PC-3 (cell line): ENCODE measurements at regions of chr2 and their contacts with region 1.

Region 1: DNA sequence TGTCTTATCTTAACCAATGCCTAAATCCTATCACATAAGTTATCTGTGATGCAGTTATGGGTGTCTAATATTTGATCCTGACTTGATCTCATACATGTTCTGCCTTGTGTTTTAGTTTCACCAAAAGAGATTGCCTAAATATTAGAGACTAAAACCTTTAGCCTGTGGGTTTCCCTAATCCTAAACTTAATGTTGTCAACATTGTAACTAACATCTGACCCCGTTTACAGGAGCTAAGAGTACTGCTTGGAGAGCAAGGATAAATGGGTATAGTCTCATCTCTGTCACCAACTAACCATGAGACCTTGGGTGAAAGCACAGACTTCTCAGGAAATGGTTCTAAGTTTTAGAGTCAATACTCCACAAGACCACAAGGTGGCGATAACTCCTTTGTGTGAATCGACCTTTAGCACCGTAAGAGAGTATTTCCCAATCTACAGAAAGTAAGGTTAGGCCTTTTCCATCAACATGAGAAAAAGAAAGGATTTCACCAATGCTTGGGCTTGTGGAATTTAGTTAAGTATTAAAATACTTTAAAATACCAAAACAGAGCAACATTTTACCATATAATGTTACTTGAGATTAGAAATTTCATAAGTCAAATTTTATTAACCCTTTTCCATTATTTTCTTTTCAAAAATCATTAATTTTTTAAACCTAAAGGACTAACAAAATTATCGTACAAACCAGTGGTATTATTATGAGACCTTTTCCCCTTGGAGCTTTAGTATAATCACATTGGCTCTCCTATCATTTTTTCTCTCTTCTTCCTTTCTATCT is 60.5 kb downstream of the G6PC2 start:
- DNase-seq: peak; percentile 92
- ATAC-seq: peak; percentile 82
- H3K4me3 ChIP-seq: no peak overlapping the region
- H3K27ac ChIP-seq: peak overlapping the region; percentile 16; the same call in 1 of the 2 replicates
- H3K4me1 ChIP-seq: peaks cover 32% of the 10 kb centered on the region
- H3K27me3 ChIP-seq: no peaks in the 10 kb centered on the region
- CTCF ChIP-seq: peak; percentile 88

Region 2: GRCh38 chr2:168626096-168626495 is 335.5 kb before region 1 on chr2:
- CTCF ChIA-PET with region 1: no interaction called
- POLR2A ChIA-PET with region 1: no interaction called
- intact Hi-C with region 1: no loop called
- DNase-seq: no peak
- ATAC-seq: no peak
- H3K4me3 ChIP-seq: no peak overlapping the region
- H3K27ac ChIP-seq: no peak overlapping the region
- H3K4me1 ChIP-seq: peaks cover 13% of the 10 kb centered on the region
- H3K27me3 ChIP-seq: no peaks in the 10 kb centered on the region
- CTCF ChIP-seq: no peak

Region 3: GRCh38 chr2:169038338-169038757 is 76.7 kb after region 1 on chr2:
- CTCF ChIA-PET with region 1: no interaction called
- POLR2A ChIA-PET with region 1: no interaction called
- intact Hi-C with region 1: loop called (anchors 5 kb)
- DNase-seq: peak; percentile 90
- ATAC-seq: peak; percentile 76
- H3K4me3 ChIP-seq: no peak overlapping the region
- H3K27ac ChIP-seq: peak overlapping the region; percentile 77
- H3K4me1 ChIP-seq: peaks cover 31% of the 10 kb centered on the region
- H3K27me3 ChIP-seq: no peaks in the 10 kb centered on the region
- CTCF ChIP-seq: no peak

Region 4: DNA sequence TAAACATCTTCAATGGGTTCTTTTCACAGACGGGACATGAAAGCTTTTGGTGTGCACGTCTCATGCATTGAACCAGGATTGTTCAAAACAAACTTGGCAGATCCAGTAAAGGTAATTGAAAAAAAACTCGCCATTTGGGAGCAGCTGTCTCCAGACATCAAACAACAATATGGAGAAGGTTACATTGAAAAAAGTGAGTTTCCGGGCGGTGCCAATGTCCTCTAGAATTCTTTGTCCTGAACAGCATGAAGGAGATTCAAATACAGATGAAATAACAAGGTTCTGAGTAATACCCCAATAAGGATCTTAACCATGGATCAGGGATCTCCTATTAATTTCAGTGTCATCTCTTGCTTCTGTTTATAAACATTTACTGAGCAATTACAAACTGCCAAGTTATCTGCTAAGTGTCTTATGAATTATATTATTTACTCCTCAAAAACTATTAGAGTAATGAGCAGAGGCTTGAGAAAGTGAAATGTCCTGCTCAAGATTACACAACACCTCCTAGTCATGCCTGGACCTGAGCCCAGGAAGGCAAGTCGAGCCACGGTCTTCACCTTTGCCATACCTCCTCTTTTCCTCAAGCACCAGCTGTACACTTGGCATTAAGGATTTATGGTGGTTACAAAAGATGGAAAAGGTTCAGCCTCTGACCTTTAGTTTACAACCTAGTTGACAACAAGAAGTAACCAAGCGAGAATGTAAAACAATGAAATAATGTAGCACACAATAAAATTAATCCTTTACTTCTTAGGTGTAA is 130.3 kb after region 1 on chr2:
- CTCF ChIA-PET with region 1: no interaction called
- POLR2A ChIA-PET with region 1: no interaction called
- intact Hi-C with region 1: no loop called
- DNase-seq: peak; percentile 90
- ATAC-seq: peak; percentile 45
- H3K4me3 ChIP-seq: peak overlapping the region; percentile 28; the same call in 1 of the 2 replicates
- H3K27ac ChIP-seq: peak overlapping the region; percentile 79
- H3K4me1 ChIP-seq: peaks cover 49% of the 10 kb centered on the region
- H3K27me3 ChIP-seq: no peaks in the 10 kb centered on the region
- CTCF ChIP-seq: no peak

Region 5: DNA sequence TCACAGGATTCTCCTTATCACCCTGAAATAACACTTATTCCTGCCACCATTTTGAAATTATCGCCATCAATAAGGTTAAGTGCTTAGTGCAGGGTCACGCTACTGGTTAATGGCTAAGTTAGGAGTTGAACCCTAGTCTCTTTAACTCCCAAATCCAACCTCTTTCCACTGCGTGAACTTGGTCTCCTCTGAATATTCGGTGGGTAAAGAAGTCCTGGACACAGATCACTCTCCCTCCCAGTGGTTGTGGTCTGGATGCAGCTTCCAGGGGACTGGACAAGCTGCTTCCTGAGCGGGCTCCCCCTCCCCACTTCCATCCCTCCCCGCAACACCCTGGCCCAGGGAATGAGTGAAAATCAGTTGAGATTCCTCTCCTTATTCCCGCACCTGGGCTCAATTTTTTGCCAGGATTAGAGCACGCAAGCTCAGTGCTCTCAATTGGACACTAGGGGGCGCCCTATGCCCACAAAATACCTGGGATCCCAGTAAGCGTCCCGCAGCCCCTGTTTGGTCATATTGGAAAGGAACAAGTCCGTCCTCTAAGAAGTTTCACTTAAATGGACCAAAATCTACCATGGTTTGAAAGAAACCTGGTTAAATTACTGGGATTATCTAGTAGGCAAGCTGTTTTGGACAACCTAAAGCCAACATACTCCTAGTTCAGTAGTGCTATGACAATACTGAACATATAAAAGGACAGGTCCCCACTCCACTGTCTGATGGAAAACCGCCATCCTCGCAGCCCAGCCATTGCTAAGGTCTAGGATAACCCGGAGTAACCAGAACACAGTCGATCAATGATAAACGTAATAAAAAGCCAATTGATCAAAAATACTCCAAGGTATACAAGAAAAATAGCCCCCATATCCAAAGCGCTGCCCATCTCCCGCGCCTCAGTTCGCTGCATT is 148.1 kb after region 1 on chr2:
- CTCF ChIA-PET with region 1: no interaction called
- POLR2A ChIA-PET with region 1: no interaction called
- intact Hi-C with region 1: loop called (anchors 1 kb)
- DNase-seq: peak; percentile 86
- ATAC-seq: peak; percentile 98
- H3K4me3 ChIP-seq: no peak overlapping the region
- H3K27ac ChIP-seq: no peak overlapping the region
- H3K4me1 ChIP-seq: peaks cover 13% of the 10 kb centered on the region; the same call in 1 of the 2 replicates
- H3K27me3 ChIP-seq: no peaks in the 10 kb centered on the region
- CTCF ChIP-seq: peak; percentile 95

Region 6: DNA sequence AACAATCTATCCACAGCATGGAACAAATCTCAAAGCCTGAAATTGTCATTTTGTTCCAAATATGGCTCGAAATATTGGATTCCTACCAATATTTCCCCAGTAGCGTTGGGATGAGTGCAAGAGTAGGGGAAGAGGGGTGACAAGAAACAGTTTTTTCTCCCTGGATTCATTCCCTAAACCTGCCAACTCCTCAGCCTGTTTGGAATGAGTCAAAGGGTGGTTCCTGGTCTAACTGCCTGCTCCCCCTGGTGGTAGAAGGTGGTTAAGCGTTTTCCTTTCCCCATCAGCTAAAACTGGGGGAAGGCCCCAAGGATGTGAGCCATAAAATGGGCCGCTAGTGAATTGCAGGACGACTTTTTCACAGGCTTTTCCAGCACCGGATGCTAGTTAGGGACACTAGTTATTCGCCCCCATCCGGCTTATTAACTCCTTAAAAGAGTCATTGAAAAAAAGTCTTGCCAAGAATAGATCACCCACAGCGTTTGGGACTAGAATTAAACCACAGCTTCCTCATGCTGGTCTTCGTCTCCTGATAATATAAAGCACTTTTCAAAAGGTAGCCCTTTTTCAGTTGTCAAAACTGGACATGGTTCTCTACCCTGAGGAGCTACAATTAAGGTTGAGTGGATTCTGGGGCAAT is 180.2 kb after region 1 on chr2:
- CTCF ChIA-PET with region 1: no interaction called
- POLR2A ChIA-PET with region 1: no interaction called
- intact Hi-C with region 1: loop called (anchors 1 kb)
- DNase-seq: peak; percentile 82
- ATAC-seq: peak; percentile 80
- H3K4me3 ChIP-seq: no peak overlapping the region
- H3K27ac ChIP-seq: no peak overlapping the region
- H3K4me1 ChIP-seq: no peaks in the 10 kb centered on the region
- H3K27me3 ChIP-seq: no peaks in the 10 kb centered on the region
- CTCF ChIP-seq: peak; percentile 87

Region 7: GRCh38 chr2:169397697-169398096 is 436.1 kb after region 1 on chr2:
- CTCF ChIA-PET with region 1: no interaction called
- POLR2A ChIA-PET with region 1: no interaction called
- intact Hi-C with region 1: loop called (anchors 5 kb)
- DNase-seq: peak; percentile 36
- ATAC-seq: no peak
- H3K4me3 ChIP-seq: no peak overlapping the region
- H3K27ac ChIP-seq: no peak overlapping the region
- H3K4me1 ChIP-seq: no peaks in the 10 kb centered on the region
- H3K27me3 ChIP-seq: peaks cover 49% of the 10 kb centered on the region
- CTCF ChIP-seq: peak; percentile 61